WTC11 (cell line): ENCODE measurements at regions of chr7 and their contacts with region 1.

Region 1: DNA sequence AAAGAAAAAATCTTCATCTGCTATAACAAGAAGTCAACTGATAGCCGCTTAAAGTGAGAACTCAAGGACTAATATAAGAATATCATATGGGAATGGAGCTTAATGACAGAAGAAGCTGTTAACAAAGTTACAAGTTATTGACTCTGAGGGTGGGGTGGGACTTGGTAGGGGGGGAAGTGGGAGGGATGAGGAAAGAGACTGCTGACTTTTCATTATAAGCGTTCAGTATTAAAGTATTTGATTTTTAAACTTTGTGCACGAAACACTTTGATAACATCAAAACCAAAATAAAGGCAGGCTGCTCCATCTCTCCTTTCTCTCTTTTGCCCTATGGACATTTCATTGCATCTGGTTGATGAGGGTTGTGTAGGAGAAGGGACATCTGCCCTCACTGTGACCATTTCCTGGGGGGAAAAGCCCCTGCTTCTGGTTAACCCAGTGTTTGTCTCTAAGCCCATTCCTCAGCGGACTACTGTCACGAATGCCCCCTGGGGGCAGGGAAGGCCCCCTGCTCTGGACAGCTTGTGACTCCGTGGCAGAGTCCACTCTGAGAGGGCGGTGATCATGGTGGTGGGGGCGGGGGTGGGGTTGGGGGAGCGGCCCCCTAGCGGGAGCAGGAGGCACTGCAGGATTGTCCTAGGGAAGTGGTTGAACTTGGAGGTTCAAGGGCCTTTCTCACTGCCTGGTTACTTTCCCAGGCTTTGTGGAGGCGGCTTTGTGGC is 17.4 kb downstream of the SLC13A4 start:
- DNase-seq: peak; percentile 31
- ATAC-seq: peak; percentile 40
- H3K4me3 Mint-ChIP-seq: no peak overlapping the region; the same call in 1 of the 2 replicates
- H3K27ac Mint-ChIP-seq: no peak overlapping the region
- H3K4me1 Mint-ChIP-seq: peaks cover 22% of the 10 kb centered on the region
- H3K27me3 Mint-ChIP-seq: no peaks in the 10 kb centered on the region
- CTCF ChIP-seq: peak; percentile 92

Region 2: GRCh38 chr7:135193615-135194081 is 516.9 kb before region 1 on chr7:
- CTCF ChIA-PET with region 1: no interaction called
- POLR2A ChIA-PET with region 1: no interaction called
- DNase-seq: no peak
- ATAC-seq: no peak
- H3K4me3 Mint-ChIP-seq: no peak overlapping the region
- H3K27ac Mint-ChIP-seq: peak overlapping the region; percentile 83; the same call in 1 of the 2 replicates
- H3K4me1 Mint-ChIP-seq: no peaks in the 10 kb centered on the region
- H3K27me3 Mint-ChIP-seq: no peaks in the 10 kb centered on the region
- CTCF ChIP-seq: no peak

Region 3: GRCh38 chr7:135684136-135684535 is 26.4 kb before region 1 on chr7:
- CTCF ChIA-PET with region 1: interaction called, 13 read pairs
- POLR2A ChIA-PET with region 1: no interaction called
- DNase-seq: no peak
- ATAC-seq: peak; percentile 41
- H3K4me3 Mint-ChIP-seq: no peak overlapping the region
- H3K27ac Mint-ChIP-seq: no peak overlapping the region
- H3K4me1 Mint-ChIP-seq: peaks cover 13% of the 10 kb centered on the region
- H3K27me3 Mint-ChIP-seq: no peaks in the 10 kb centered on the region
- CTCF ChIP-seq: no peak

Region 4: GRCh38 chr7:135721198-135721820 is 10.7 kb after region 1 on chr7:
- CTCF ChIA-PET with region 1: interaction called, 49 read pairs
- POLR2A ChIA-PET with region 1: no interaction called
- DNase-seq: no peak
- ATAC-seq: peak; percentile 80
- H3K4me3 Mint-ChIP-seq: no peak overlapping the region
- H3K27ac Mint-ChIP-seq: no peak overlapping the region
- H3K4me1 Mint-ChIP-seq: peaks cover 7% of the 10 kb centered on the region
- H3K27me3 Mint-ChIP-seq: no peaks in the 10 kb centered on the region
- CTCF ChIP-seq: no peak

Region 5: DNA sequence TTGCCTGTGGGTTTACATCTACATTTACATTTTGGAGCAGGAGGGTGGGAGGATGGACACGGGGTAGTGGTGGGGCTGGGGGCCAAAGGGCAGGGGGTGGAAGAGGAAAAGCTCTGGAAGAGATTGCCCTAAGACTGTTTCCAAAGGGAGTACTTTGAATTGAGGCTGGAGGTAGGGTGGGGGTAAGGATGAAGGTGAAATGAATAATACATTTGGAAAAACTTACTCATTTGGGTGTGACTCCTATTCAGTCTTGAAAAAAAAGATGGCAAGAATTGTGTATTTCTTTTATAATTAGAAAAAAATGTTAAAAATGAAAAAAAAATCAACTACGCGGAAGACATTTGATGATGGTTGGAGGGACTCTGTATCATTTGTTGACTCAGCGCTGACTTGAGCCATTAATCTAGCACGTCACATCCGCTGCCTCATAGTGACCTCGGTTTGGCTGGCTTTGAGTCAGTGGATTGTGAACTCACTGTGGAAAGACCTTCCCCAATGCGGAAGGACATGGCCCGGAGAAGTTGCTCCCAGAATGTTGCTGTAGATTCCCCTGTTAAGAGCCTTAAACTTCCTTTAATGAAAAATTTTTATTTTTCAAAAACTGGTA is 35.2 kb after region 1 on chr7:
- CTCF ChIA-PET with region 1: interaction called, 12 read pairs
- POLR2A ChIA-PET with region 1: no interaction called
- DNase-seq: no peak
- ATAC-seq: no peak
- H3K4me3 Mint-ChIP-seq: no peak overlapping the region
- H3K27ac Mint-ChIP-seq: no peak overlapping the region
- H3K4me1 Mint-ChIP-seq: peaks cover 14% of the 10 kb centered on the region
- H3K27me3 Mint-ChIP-seq: no peaks in the 10 kb centered on the region; the same call in 1 of the 2 replicates
- CTCF ChIP-seq: no peak

Region 6: GRCh38 chr7:135800560-135800959 is 90.0 kb after region 1 on chr7:
- CTCF ChIA-PET with region 1: interaction called, 18 read pairs
- POLR2A ChIA-PET with region 1: no interaction called
- DNase-seq: peak; percentile 22
- ATAC-seq: peak; percentile 73
- H3K4me3 Mint-ChIP-seq: peak overlapping the region; percentile 59
- H3K27ac Mint-ChIP-seq: peak overlapping the region; percentile 44; the same call in 1 of the 2 replicates
- H3K4me1 Mint-ChIP-seq: peaks cover 10% of the 10 kb centered on the region
- H3K27me3 Mint-ChIP-seq: peaks cover 4% of the 10 kb centered on the region; the same call in 1 of the 2 replicates
- CTCF ChIP-seq: no peak

Region 7: DNA sequence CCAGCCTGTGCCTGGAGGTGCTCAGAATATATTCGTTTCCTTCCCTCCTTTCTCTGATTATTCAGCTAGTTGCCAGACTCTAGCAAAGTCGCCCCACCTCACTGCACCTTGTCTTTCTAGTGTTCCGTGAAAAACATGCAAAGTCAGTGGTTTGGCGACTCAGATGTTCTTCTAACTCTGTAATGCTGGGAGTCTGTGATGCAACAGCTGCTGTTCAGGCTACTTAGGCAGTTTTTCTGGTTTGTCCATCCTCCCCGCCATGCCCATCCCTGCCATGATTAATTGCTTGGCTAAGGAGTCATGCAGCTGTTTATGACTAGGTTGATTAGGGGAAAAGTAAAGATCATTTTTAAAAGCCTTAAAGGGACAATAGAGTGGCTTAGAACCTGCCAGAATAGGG is 167.2 kb after region 1 on chr7:
- CTCF ChIA-PET with region 1: no interaction called
- POLR2A ChIA-PET with region 1: no interaction called
- DNase-seq: no peak
- ATAC-seq: no peak
- H3K4me3 Mint-ChIP-seq: no peak overlapping the region
- H3K27ac Mint-ChIP-seq: no peak overlapping the region
- H3K4me1 Mint-ChIP-seq: no peaks in the 10 kb centered on the region
- H3K27me3 Mint-ChIP-seq: no peaks in the 10 kb centered on the region; the same call in 1 of the 2 replicates
- CTCF ChIP-seq: no peak